OCI-LY7 (cell line): ENCODE measurements at regions of chr18 and their contacts with region 1.

Region 1: DNA sequence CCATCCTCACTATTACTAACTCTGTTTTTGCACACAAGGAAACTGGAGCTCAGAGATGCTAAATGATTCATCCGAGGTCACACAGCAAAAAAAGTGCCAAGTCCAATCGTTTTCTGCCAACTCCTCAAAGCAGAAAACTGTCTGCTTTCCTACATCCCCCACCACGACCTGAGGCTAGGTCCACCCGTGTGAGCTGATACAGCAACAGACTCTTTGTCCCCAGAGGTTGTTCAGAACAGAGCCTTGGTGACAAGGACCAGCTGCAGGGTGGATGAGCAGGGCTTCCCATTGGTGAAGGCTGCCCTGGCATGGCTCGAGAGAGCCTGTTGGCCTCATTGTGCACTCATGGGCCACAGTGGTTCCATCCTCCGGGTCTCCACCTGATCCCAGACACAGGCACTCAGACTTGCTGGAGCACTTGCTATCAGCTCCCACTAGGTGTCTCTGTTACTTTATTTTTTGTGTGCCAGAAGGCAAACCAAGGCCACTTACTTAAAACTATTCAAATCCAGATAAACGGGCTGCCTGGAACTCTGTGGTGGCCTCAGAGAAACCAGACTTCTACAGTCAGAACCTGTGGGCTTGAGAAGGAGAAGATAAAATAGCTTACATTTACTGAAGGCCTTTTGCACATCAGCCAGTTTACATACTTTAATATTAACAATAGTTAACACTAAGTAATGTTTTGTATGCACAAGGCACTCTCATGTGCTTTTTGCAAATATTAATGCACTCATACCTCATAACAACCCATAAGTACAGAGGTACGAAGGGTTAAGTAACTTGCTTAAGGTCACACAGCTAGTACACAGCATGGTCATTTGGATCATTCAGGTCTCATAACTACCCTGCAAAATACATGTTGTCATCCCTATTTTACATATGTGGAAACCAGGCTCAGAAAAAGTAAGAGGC is 62.9 kb upstream of the CTIF start:
- DNase-seq: peak; percentile 52
- H3K4me3 ChIP-seq: no peak overlapping the region
- H3K27ac ChIP-seq: no peak overlapping the region
- H3K4me1 ChIP-seq: no peaks in the 10 kb centered on the region
- CTCF ChIP-seq: peak; percentile 80

Region 2: GRCh38 chr18:48749768-48750167 is 273.9 kb after region 1 on chr18:
- CTCF ChIA-PET with region 1: no interaction called
- POLR2A ChIA-PET with region 1: no interaction called
- intact Hi-C with region 1: loop called (anchors 10 kb)
- DNase-seq: no peak
- H3K4me3 ChIP-seq: no peak overlapping the region
- H3K27ac ChIP-seq: no peak overlapping the region
- H3K4me1 ChIP-seq: no peaks in the 10 kb centered on the region
- CTCF ChIP-seq: no peak